ENCODE measurements at regions of chr19 and their contacts with region 1.

Region 1: DNA sequence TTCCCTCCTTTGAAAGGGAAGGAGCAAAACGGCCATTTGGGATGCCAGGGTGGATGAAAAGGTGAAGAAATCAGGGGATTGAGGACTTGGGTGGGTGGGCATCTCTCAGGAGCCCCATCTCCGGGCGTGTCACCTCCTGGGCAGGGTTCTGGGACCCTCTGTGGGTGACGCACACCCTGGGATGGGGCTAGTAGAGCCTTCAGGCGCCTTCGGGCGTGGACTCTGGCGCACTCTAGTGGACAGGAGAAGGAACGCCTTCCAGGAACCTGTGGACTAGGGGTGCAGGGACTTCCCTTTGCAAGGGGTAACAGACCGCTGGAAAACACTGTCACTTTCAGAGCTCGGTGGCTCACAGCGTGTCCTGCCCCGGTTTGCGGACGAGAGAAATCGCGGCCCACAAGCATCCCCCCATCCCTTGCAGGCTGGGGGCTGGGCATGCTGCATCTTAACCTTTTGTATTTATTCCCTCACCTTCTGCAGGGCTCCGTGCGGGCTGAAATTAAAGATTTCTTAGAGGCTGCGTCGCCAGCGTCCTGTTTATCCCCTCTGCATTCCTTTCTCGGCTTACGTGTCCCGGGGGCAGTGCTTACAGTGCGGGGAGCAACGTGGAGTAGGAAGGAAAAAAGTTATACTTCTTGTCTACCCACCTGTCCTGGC is 15.2 kb upstream of the S1PR4 start:
- DNase-seq: no peak
- H3K4me3 ChIP-seq: no peak overlapping the region
- H3K27ac ChIP-seq: no peak overlapping the region
- H3K4me1 ChIP-seq: peaks cover 0 to 7% (median 6%) of the 10 kb centered on the region in 4 donors
- H3K27me3 ChIP-seq: no peaks in the 10 kb centered on the region
- CTCF ChIP-seq: peak; percentile 82 to 97 (median 86)
- EP300 ChIP-seq: no peak
- POLR2A ChIP-seq: no peak

Region 2: DNA sequence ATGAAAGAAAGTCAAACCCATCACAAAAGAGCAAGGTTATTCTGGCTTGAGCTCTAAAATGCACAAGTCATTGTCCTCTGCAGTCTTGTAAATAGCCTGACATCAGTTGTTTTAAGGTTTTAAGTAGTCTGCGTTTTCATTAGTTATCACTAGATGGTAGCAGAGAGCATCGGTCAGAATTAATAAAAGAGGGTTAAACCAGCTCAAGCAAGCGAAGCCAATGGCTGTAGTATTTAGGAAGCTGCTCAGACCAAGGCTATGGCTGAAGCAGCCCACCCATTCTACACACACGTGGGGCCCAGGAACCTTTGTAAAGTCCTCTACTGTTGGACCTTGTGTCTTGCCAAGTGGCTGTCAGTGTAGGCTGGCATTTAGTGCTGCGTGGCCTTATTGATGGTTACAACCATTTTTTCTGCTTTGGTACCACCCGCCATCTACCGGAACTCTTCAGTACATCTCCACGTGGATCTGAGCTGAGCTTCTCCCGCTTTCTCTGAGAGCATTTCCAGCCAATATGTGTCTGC is 275.9 kb before region 1 on chr19:
- intact Hi-C with region 1: loop called (anchors 1 kb)
- DNase-seq: no peak
- H3K4me3 ChIP-seq: peak overlapping the region in 1 of 4 donors; percentile 13
- H3K27ac ChIP-seq: no peak overlapping the region
- H3K4me1 ChIP-seq: peaks cover 0 to 6% (median 2%) of the 10 kb centered on the region in 4 donors
- H3K27me3 ChIP-seq: peaks cover 0 to 6% (median 0%) of the 10 kb centered on the region in 4 donors
- CTCF ChIP-seq: peak; percentile 66 to 74 (median 72)
- EP300 ChIP-seq: no peak
- POLR2A ChIP-seq: no peak

Region 3: DNA sequence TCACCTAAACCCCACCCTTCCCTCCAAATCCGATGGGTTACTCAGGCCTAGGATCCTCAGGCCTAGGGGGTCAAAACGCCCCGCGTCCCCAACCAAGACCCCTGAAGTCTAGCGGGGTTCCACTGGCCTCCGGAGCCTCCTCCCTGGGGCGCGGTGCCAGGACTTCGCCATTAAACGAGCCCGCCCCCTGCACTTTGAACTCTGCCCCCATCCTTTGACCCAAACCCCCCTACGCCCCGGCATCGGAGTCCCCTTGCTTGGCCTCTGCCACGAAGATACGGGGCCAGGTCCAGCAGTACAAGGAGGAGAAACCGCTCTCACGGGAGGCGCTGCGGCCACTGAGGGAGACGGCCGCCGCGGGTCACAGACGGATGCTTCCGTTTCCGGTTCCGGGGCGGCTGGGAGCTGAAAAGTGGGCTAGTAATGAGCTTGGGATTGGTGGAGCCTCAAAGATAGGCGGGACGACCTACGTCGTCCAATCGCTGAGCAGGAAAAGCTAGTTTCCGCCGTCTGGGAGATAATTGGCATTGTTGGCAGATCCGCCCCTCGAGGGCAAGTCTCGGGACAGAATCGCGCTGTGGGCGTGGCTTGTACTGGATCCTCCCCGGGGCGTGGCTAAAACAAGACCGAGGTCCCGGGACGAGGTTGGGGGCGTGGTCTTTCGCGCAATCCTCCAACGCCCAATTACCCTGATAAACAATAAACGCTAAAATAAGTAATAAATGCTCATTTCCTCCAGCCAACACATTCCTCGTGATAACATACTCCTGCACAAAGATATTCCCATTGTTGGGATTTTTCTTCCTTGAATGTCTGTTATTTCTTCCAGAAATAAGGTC is 212.9 kb before region 1 on chr19:
- intact Hi-C with region 1: loop called (anchors 5 kb)
- DNase-seq: peak; percentile 100
- H3K4me3 ChIP-seq: peak overlapping the region; percentile 55 to 85 (median 80)
- H3K27ac ChIP-seq: peak overlapping the region; percentile 90 to 95 (median 94)
- H3K4me1 ChIP-seq: peaks cover 17 to 34% (median 27%) of the 10 kb centered on the region in 4 donors
- H3K27me3 ChIP-seq: no peaks in the 10 kb centered on the region
- CTCF ChIP-seq: no peak
- EP300 ChIP-seq: no peak
- POLR2A ChIP-seq: peak; percentile 87

Region 4: GRCh38 chr19:3075895-3076431 is 87.4 kb before region 1 on chr19:
- intact Hi-C with region 1: loop called (anchors 2 kb)
- DNase-seq: no peak
- H3K4me3 ChIP-seq: peak overlapping the region in 2 of 4 donors; percentile 16 to 21
- H3K27ac ChIP-seq: peak overlapping the region in 1 of 4 donors; percentile 29
- H3K4me1 ChIP-seq: peaks cover 14 to 39% (median 24%) of the 10 kb centered on the region in 4 donors
- H3K27me3 ChIP-seq: no peaks in the 10 kb centered on the region
- CTCF ChIP-seq: peak; percentile 97 to 99 (median 98)
- EP300 ChIP-seq: no peak
- POLR2A ChIP-seq: no peak

Region 5: DNA sequence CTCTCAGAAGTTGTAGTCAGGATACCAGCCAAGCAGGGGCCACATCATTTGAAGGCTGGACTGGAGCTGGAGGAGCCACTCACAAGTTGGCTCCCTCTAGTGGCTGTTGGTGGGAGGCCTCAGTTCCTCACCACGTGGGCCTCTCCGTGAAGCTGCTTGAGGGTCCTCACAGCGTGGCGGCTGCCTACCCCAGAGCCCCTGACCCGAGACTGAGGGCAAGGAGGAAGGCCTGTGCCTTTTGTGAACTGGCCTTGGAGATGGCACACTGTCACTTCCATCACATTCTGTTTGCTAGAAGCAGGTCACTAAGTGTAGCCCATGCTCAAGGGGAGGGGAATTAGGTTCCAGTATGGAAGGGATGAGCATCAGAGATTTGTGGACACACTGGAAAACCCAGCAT is 54.6 kb before region 1 on chr19:
- intact Hi-C with region 1: no loop called
- DNase-seq: no peak
- H3K4me3 ChIP-seq: no peak overlapping the region
- H3K27ac ChIP-seq: peak overlapping the region in 2 of 4 donors; percentile 22 to 45
- H3K4me1 ChIP-seq: peaks cover 39 to 76% (median 58%) of the 10 kb centered on the region in 4 donors
- H3K27me3 ChIP-seq: no peaks in the 10 kb centered on the region
- CTCF ChIP-seq: peak; percentile 72 to 91 (median 72)
- EP300 ChIP-seq: no peak
- POLR2A ChIP-seq: no peak

Region 6: GRCh38 chr19:3125900-3126524 is 37.3 kb before region 1 on chr19:
- intact Hi-C with region 1: loop called (anchors 5 kb)
- DNase-seq: no peak
- H3K4me3 ChIP-seq: no peak overlapping the region
- H3K27ac ChIP-seq: no peak overlapping the region
- H3K4me1 ChIP-seq: peaks cover 0 to 7% (median 0%) of the 10 kb centered on the region in 4 donors
- H3K27me3 ChIP-seq: no peaks in the 10 kb centered on the region
- CTCF ChIP-seq: peak; percentile 65 to 84 (median 67)
- EP300 ChIP-seq: no peak
- POLR2A ChIP-seq: no peak

Region 7: GRCh38 chr19:3135961-3136683 is 27.2 kb before region 1 on chr19 and contains the start of gene GNA15:
- intact Hi-C with region 1: no loop called
- DNase-seq: no peak
- H3K4me3 ChIP-seq: peak within 1 kb of the TSS; percentile 22 to 55 (median 40)
- H3K27ac ChIP-seq: peak within 1 kb of the TSS in 3 of 4 donors; percentile 54 to 66 (median 65)
- H3K4me1 ChIP-seq: peaks cover 2 to 8% (median 4%) of the 10 kb centered on the region in 4 donors
- H3K27me3 ChIP-seq: peaks cover 0 to 12% (median 0%) of the 10 kb centered on the region in 4 donors
- CTCF ChIP-seq: no peak
- EP300 ChIP-seq: no peak
- POLR2A ChIP-seq: no peak
- total RNA-seq, gene GNA15: 4.3 to 13.8 (median 5.3) TPM